ENCODE measurements at regions of chr1 and their contacts with region 1.

Region 1: GRCh38 chr1:35715568-35716002 is 3.1 kb downstream of the C1orf216 start:
- DNase-seq: peak; percentile 70 to 83 (median 77)
- H3K4me3 ChIP-seq: no peak overlapping the region
- H3K27ac ChIP-seq: no peak overlapping the region
- H3K4me1 ChIP-seq: peaks cover 0 to 42% (median 35%) of the 10 kb centered on the region in 4 experiments
- H3K27me3 ChIP-seq: no peaks in the 10 kb centered on the region

Region 2: DNA sequence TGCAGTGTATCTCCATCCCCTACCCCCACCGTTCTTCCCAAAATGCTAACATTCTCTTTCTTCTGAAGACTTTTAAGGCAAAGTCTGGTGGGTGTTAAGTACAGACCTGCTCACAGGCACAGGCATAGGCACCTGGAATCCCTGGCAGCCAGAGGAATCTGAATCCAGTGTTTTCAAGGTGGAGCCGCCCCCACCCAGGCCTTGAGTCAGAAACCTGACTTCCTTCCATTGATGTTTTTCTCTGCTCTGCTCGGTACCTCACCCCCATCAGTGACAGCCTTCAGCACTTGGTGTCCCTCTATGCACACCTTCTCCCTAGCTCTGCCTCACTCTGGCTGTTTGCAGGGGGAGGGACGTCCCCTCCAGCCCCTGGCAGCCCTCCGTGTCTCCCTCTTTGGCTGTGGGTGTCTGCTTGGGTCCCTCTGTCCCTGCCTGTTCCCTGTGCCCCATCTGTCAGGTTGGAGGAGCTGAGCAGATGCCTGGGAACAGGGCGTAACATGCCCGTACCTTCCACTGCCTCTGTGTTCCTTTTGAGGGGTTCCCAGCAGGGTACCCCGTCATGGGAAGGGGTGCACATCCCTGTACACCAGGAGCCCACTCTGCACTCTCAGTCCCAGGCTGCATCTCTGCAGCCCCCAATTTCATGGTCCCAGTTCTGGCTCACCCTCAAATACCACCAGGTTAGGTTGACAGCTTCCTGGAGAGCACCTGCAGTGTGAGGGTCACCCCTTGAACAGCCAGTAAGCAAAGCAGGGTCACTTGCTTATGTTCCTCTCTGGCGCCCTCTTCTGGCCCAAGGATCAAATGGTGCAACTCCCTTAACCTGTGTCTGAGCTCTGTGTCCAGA is 151.3 kb before region 1 on chr1:
- CTCF ChIA-PET with region 1: interaction called, 68 read pairs
- POLR2A ChIA-PET with region 1: no interaction called
- DNase-seq: peak; percentile 76 to 86 (median 77)
- H3K4me3 ChIP-seq: no peak overlapping the region
- H3K27ac ChIP-seq: no peak overlapping the region
- H3K4me1 ChIP-seq: peaks cover 0 to 24% (median 15%) of the 10 kb centered on the region in 4 experiments
- H3K27me3 ChIP-seq: no peaks in the 10 kb centered on the region

Region 3: DNA sequence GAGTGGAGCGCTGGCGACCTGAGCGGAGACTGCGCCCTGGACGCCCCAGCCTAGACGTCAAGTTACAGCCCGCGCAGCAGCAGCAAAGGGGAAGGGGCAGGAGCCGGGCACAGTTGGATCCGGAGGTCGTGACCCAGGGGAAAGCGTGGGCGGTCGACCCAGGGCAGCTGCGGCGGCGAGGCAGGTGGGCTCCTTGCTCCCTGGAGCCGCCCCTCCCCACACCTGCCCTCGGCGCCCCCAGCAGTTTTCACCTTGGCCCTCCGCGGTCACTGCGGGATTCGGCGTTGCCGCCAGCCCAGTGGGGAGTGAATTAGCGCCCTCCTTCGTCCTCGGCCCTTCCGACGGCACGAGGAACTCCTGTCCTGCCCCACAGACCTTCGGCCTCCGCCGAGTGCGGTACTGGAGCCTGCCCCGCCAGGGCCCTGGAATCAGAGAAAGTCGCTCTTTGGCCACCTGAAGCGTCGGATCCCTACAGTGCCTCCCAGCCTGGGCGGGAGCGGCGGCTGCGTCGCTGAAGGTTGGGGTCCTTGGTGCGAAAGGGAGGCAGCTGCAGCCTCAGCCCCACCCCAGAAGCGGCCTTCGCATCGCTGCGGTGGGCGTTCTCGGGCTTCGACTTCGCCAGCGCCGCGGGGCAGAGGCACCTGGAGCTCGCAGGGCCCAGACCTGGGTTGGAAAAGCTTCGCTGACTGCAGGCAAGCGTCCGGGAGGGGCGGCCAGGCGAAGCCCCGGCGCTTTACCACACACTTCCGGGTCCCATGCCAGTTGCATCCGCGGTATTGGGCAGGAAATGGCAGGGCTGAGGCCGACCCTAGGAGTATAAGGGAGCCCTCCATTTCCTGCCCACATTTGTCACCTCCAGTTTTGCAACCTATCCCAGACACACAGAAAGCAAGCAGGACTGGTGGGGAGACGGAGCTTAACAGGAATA is 138.2 kb before region 1 on chr1:
- CTCF ChIA-PET with region 1: interaction called, 18 read pairs
- POLR2A ChIA-PET with region 1: no interaction called
- DNase-seq: peak; percentile 91 to 99 (median 98)
- H3K4me3 ChIP-seq: peak overlapping the region; percentile 25 to 82 (median 67)
- H3K27ac ChIP-seq: peak overlapping the region in 1 of 2 experiments; percentile 55
- H3K4me1 ChIP-seq: peaks cover 3 to 51% (median 47%) of the 10 kb centered on the region in 4 experiments
- H3K27me3 ChIP-seq: peaks cover 0 to 6% (median 0%) of the 10 kb centered on the region in 5 experiments

Region 4: GRCh38 chr1:35646043-35646442 is 69.5 kb before region 1 on chr1:
- CTCF ChIA-PET with region 1: interaction called, 15 read pairs
- POLR2A ChIA-PET with region 1: no interaction called
- DNase-seq: peak in 2 of 3 donors; percentile 32 to 41
- H3K4me3 ChIP-seq: no peak overlapping the region
- H3K27ac ChIP-seq: no peak overlapping the region
- H3K4me1 ChIP-seq: peaks cover 0 to 7% (median 2%) of the 10 kb centered on the region in 4 experiments
- H3K27me3 ChIP-seq: peaks cover 0 to 20% (median 13%) of the 10 kb centered on the region in 5 experiments

Region 5: DNA sequence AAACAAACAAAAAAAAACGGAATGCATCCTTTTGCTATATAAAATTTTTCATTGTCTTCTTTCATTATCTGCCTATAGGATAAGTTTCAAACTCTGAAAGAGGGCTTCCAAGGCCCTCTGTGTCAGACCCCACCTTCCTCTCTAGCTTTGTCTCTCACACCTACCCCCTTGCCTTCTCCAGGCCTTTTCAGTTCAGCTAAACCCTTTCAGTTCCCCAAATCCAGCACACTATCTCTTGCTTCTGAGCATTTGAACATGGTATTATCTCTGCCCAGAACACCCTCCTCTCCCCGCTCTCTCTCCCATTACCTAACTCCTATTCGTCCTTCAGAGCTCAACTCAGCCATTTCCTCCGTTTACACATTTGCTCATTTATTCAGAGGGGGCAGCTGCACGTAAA is 32.6 kb before region 1 on chr1:
- CTCF ChIA-PET with region 1: interaction called, 13 read pairs
- POLR2A ChIA-PET with region 1: no interaction called
- DNase-seq: no peak
- H3K4me3 ChIP-seq: no peak overlapping the region
- H3K27ac ChIP-seq: no peak overlapping the region
- H3K4me1 ChIP-seq: peaks cover 0 to 13% (median 4%) of the 10 kb centered on the region in 4 experiments
- H3K27me3 ChIP-seq: peaks cover 0 to 10% (median under 1%) of the 10 kb centered on the region in 5 experiments

Region 6: DNA sequence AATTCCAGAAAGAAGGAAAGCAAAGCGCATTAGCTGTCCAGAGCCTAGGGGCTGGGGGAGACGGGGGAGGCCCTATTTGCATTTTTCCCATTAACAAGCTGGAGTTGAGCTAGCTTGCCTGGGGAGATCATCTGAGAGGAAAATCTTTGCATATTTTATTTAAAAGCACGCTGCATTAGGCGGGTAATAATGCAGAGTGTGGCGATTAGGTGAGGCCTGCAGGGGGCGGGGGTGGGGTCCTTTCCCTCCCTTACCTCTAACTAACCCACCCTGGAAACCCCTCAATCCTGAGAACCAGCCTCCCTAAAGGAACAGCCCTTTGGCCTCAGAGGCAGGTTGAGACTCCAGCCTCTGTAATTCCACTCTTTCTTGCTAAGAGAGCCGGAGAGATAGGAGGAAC is 13.1 kb before region 1 on chr1:
- CTCF ChIA-PET with region 1: interaction called, 14 read pairs
- POLR2A ChIA-PET with region 1: no interaction called
- DNase-seq: no peak
- H3K4me3 ChIP-seq: no peak overlapping the region
- H3K27ac ChIP-seq: no peak overlapping the region
- H3K4me1 ChIP-seq: peaks cover 0 to 6% (median 3%) of the 10 kb centered on the region in 4 experiments
- H3K27me3 ChIP-seq: peaks cover 17 to 80% (median 35%) of the 10 kb centered on the region in 5 experiments

Region 7: GRCh38 chr1:35737120-35737519 is 21.5 kb after region 1 on chr1:
- CTCF ChIA-PET with region 1: interaction called, 11 read pairs
- POLR2A ChIA-PET with region 1: interaction called, 3 read pairs
- DNase-seq: no peak
- H3K4me3 ChIP-seq: no peak overlapping the region
- H3K27ac ChIP-seq: no peak overlapping the region
- H3K4me1 ChIP-seq: no peaks in the 10 kb centered on the region
- H3K27me3 ChIP-seq: no peaks in the 10 kb centered on the region

Region 8: DNA sequence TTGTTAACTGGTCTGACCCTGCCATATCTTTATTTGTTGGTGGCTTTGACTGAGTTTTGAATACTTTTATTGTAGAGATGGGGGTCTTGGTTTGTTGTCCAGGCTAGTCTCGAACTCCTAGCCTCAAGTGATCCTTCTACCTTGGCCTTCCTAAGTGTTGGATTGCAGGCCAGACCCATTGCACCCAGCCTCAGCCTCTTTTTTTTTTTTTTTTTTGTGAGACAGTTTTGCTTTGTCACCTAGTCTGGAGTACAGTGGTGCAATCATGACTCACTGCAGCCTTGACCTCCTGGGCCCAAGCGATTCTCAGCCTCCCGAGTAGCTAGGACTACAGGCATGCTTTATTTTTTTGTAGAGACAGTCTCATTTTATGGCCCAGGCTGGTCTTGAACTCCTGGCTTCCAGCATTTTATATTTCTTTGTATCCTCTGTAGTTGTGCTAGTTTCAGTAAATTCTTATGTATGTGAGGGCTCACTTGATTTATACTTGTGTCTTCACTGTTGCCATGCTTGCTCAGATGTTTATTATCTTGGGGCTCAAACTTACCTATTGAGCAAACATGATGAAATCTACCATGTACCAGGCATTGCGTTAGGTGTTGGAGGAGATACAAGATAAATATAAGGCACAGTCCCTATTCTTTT is 532.8 kb after region 1 on chr1:
- CTCF ChIA-PET with region 1: no interaction called
- POLR2A ChIA-PET with region 1: no interaction called
- DNase-seq: peak; percentile 16 to 68 (median 60)
- H3K4me3 ChIP-seq: no peak overlapping the region
- H3K27ac ChIP-seq: peak overlapping the region in 1 of 2 experiments; percentile 18
- H3K4me1 ChIP-seq: peaks cover 0 to 3% (median 0%) of the 10 kb centered on the region in 4 experiments
- H3K27me3 ChIP-seq: no peaks in the 10 kb centered on the region